Mammary epithelial cell (primary cell): ENCODE measurements at regions of chr1 and their contacts with region 1.

Region 1: DNA sequence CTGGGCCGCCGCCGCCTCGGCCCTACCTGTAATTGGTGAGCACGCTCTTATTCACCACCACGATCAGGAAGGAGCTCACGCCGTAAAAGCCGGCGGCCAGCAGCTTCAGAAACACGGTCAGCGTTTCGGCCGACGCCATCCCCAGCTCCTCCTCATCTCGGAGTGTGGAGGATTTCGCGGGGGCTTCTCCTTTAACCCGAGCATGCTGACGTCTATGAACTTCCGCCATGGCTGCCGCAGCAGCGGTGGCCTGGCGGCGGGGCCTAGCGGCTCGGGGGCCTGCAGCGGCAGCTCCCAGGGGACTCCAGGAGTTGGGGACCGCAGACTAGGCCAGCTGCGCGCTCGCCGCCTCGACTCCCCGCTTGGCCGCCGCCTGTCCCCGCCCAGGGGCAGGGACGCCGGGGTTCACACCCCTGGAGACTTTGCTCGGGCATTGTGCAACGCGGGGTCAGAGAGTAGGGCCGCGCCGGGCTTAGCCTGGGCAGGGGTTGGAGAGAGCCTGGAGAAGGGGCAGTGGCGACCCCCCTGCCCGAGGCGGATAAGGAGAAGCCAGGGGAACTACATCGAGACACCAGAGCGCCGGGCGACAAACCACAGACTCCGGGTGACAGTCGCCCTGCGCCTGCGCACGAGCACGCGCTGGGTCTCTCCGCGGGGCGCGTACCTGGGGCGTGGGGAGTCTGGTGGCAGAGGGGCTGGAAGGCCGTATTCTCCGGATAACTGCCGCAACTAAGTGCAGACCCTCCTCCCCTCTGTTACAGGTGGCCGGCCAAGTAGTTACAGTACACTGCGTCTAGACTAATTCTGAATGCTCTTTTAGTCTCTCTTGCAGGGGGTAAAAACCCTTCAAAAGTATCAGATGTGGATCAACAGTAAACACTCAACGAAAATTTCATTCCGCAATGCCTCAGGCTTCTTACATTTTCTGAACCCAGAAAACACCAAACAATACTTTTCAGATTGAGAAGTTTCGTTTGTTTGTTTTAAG is at the start of gene SLC35D1:
- DNase-seq: peak; percentile 64
- H3K4me3 ChIP-seq: peak within 1 kb of the TSS; percentile 68 to 90 (median 74)
- H3K27ac ChIP-seq: peak within 1 kb of the TSS; percentile 86
- H3K4me1 ChIP-seq: peaks cover 18% of the 10 kb centered on the region
- H3K27me3 ChIP-seq: no peaks in the 10 kb centered on the region
- CTCF ChIP-seq: no peak
- total RNA-seq, gene SLC35D1: 18.2 to 25.0 TPM

Region 2: DNA sequence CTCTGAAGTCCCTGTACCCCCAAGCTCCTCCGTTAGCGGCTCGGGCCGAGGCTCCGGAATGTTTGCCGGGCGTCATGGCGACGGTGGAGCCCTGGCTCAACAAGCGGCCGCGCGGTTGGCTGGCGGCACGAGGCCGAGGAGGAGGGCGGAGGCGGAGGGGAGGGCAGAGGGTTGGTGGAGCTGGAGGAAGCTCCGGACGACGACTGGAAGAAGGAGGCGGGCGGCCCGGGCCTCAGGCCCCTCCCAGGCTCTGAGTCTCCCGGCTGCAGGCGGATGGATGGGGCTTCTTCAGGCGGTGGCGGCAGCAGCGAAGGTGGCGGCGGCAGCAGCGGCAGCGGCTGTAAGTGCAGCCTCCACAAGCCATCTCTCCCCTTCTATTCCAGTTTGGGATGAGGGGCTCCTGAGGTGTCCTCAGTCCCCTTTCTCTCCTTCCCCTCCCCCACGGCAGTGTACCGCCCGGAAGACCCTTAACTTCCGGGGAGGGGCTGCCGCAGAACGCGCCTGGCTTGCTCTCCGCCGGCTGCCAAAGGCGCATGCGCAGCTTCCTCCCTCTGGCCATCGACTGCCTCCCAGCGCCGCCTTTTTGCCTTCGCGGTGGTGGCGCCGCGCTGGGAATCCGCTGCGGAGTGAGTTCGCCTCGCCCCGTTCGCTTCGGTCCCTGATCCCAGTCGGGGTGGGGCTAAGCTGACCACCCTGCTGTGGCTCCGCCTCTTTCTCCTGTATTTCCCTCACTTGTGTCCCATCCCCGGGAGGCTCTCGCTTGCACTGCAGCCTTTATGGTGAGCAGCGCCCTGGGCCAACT is 129.1 kb before region 1 on chr1 and contains the starts of genes DNAI4 and MIER1:
- CTCF ChIA-PET with region 1: no interaction called
- dilution Hi-C with region 1: no loop called
- in situ Hi-C with region 1: no loop called
- intact Hi-C with region 1: loop called (anchors 2 kb)
- DNase-seq: peak; percentile 99
- H3K4me3 ChIP-seq: peak within 1 kb of the TSS; percentile 65 to 99 (median 86)
- H3K27ac ChIP-seq: peak within 1 kb of the TSS; percentile 99
- H3K4me1 ChIP-seq: peaks cover 15% of the 10 kb centered on the region
- H3K27me3 ChIP-seq: no peaks in the 10 kb centered on the region
- CTCF ChIP-seq: peak in 1 of 2 donors; percentile 33
- total RNA-seq, gene DNAI4: 2.9 to 6.0 TPM
- total RNA-seq, gene MIER1: 33.0 to 35.7 TPM

Region 3: DNA sequence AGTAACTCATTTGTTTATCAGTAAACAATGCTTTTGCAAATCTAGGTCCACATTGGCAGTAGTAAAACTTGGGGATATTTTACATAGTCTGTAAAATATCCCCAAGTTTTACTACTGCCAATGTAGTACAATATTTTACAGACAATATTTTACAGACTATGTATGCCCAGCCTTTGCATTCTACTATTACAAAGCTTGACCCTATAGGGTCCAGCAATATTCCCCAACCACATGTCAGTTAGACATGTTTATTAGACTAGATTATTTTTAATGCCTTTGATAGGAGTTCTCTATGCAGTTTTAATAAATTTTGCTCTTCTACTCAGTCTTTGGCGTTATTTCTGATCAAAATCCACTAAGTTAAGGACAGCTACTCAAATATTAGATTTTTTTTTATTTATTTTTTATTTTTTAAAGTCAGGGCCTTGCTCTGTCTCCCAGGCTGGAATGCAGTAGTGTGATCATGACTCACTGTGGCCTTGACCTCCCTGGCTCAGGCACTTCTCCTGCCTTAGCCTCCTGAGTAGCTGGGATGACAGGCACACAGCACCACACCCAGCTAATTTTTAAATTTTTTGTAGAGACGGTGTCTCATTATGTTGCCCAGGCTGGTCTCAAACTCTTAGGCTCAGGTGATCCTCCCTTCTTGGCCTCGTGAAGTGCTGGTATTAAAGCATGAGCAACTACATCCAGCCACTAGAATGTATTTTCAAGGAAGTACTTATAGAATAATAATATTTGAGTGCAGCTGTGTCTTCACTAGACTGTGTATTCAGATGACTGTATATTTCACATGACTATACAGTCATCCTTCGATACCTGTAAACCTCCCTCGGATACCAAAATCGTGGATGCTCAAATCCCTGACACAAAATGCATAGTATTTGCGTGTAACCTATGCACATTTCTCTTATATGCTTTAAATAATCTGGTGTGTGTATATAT is 109.5 kb before region 1 on chr1:
- CTCF ChIA-PET with region 1: no interaction called
- dilution Hi-C with region 1: no loop called
- in situ Hi-C with region 1: no loop called
- intact Hi-C with region 1: loop called (anchors 5 kb)
- DNase-seq: peak; percentile 86
- H3K4me3 ChIP-seq: no peak overlapping the region
- H3K27ac ChIP-seq: peak overlapping the region; percentile 69
- H3K4me1 ChIP-seq: peaks cover 17% of the 10 kb centered on the region
- H3K27me3 ChIP-seq: no peaks in the 10 kb centered on the region
- CTCF ChIP-seq: no peak

Region 4: GRCh38 chr1:66957938-66958337 is 96.1 kb before region 1 on chr1:
- CTCF ChIA-PET with region 1: no interaction called
- dilution Hi-C with region 1: no loop called
- in situ Hi-C with region 1: no loop called
- intact Hi-C with region 1: no loop called
- DNase-seq: no peak
- H3K4me3 ChIP-seq: no peak overlapping the region
- H3K27ac ChIP-seq: no peak overlapping the region
- H3K4me1 ChIP-seq: no peaks in the 10 kb centered on the region
- H3K27me3 ChIP-seq: no peaks in the 10 kb centered on the region
- CTCF ChIP-seq: no peak

Region 5: GRCh38 chr1:66996018-66996682 is 57.9 kb before region 1 on chr1:
- CTCF ChIA-PET with region 1: no interaction called
- dilution Hi-C with region 1: no loop called
- in situ Hi-C with region 1: no loop called
- intact Hi-C with region 1: loop called (anchors 2 kb)
- DNase-seq: peak; percentile 54
- H3K4me3 ChIP-seq: no peak overlapping the region
- H3K27ac ChIP-seq: no peak overlapping the region
- H3K4me1 ChIP-seq: no peaks in the 10 kb centered on the region
- H3K27me3 ChIP-seq: no peaks in the 10 kb centered on the region
- CTCF ChIP-seq: peak; percentile 86 to 87

Region 6: GRCh38 chr1:67149179-67149770 is 95.2 kb after region 1 on chr1:
- CTCF ChIA-PET with region 1: no interaction called
- dilution Hi-C with region 1: no loop called
- in situ Hi-C with region 1: loop called in 1 of 2 experiments (anchors 5 kb)
- intact Hi-C with region 1: loop called (anchors 2 kb)
- DNase-seq: peak; percentile 75
- H3K4me3 ChIP-seq: no peak overlapping the region
- H3K27ac ChIP-seq: peak overlapping the region; percentile 13
- H3K4me1 ChIP-seq: peaks cover 23% of the 10 kb centered on the region
- H3K27me3 ChIP-seq: no peaks in the 10 kb centered on the region
- CTCF ChIP-seq: peak; percentile 84 to 93

Region 7: GRCh38 chr1:67214420-67215174 is 160.5 kb after region 1 on chr1:
- CTCF ChIA-PET with region 1: no interaction called
- dilution Hi-C with region 1: no loop called
- in situ Hi-C with region 1: no loop called
- intact Hi-C with region 1: loop called (anchors 2 kb)
- DNase-seq: peak; percentile 38
- H3K4me3 ChIP-seq: no peak overlapping the region
- H3K27ac ChIP-seq: no peak overlapping the region
- H3K4me1 ChIP-seq: peaks cover 3% of the 10 kb centered on the region
- H3K27me3 ChIP-seq: no peaks in the 10 kb centered on the region
- CTCF ChIP-seq: peak; percentile 54 to 71